ENCODE measurements at regions of chr19 and their contacts with region 1.

Region 1: DNA sequence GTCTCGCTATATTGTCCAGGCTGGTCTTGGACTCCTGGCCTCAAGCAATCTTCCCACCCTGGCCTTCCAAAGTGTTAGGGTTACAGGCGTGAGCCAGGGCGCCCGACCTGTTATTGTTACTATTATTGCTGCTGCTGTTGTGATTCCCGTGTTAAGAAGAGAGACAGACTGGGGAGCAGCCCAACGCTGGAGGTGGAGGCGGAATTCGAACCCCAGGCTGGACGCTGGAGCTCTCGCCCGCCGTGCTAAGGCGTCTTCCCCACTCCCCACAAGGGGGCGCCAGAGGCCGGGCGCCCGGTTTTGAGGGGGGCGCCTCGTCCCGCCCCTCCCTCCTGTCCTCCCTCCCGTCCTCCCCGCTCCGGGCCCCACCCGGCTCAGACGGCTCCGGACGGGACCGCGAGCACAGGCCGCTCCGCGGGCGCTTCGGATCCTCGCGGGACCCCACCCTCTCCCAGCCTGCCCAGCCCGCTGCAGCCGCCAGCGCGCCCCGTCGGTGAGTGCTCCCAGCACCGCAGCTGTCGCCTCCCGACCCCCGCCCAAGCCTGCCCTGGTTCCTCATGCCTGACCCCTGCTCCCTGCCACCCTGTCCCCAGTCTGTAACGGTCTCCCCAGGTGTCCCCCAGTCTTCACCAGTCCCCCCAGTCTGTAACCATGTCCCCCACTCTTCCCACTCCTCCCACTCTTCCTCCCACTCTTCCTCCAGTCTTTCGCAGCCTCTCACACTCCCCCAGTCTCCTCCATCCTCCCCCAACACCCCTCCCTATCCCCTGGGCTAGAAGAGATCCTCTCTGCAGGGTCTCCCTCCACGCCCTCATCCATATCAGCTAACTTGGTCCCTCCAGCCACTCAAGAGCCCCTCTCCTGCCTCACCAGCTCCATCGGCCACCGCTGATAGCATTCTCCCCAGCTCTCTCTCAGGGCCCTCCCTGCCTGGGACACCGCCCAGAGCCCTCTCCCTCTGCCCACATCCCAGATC is at the start of gene EHD2:
- DNase-seq: peak; percentile 88
- ATAC-seq: peak; percentile 95
- total RNA-seq, gene EHD2: 153 TPM

Region 2: GRCh38 chr19:47598407-47599349 is 114.7 kb before region 1 on chr19:
- intact Hi-C with region 1: no loop called
- DNase-seq: no peak
- ATAC-seq: peak; percentile 35

Region 3: DNA sequence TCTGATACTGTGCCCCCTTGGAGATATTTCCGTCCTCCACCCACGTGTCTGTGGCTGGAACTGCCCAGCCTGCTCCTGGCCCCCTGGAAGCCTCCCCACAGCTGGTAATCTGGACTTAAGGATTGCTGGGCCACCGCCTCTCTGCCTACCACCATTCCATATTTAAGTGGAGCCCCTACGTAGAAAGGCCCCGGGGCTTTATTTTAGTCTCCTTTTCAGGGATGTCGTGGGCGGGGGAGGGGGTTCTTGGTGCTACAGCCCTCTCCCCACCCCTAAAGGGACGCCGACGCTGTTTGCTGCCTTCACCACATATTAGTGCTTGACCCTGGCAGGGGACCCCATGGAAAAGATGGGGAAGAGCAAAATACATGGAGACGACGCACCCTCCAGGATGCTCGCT is 29.3 kb after region 1 on chr19:
- intact Hi-C with region 1: loop called (anchors 2 kb)
- DNase-seq: no peak
- ATAC-seq: peak; percentile 7

Region 4: DNA sequence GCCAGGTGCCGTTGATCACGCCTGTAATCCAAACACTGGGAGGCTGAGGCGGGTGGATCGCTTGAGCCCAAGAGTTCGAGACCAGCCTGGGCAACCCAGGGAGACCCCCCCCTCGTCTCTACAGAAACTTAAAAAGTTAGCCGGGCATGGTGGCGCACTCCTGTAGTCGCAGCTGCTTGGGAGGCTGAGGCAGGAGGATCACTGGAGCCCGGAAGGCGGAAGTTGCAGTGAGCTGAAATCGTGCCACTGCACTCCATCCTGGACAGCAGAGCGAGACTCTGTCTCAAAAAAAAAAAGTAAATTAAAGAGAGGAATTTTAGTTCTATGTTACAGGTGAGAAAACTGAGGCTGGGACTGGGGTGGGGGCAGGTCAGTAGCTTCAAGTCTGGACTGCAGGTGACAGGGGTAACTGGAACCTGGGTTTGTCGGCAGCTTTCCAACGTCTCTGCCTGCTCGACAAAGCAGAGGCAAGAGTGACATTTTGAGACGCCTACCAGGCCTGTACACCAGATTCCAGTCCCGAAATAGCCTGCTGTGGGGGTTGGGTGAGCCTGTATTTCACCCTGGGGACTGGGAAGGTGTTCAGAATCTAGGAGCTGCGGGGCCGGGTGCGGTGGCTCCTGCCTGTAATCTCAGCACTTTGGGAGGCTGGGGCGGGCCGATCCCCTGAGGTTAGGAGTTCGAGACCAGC is 66.3 kb after region 1 on chr19:
- intact Hi-C with region 1: loop called (anchors 10 kb)
- DNase-seq: peak; percentile 75
- ATAC-seq: peak; percentile 33

Measured in sciatic nerve (tissue), 2 donors.